ENCODE measurements at regions of chr16 and their contacts with region 1.

Region 1: GRCh38 chr16:2194852-2195321 is 1.5 kb downstream of the CASKIN1 start:
- DNase-seq: no peak
- ATAC-seq: peak; percentile 81
- H3K4me3 ChIP-seq: no peak overlapping the region
- H3K27ac ChIP-seq: no peak overlapping the region; the same call in 1 of the 2 replicates
- H3K4me1 ChIP-seq: peaks cover 5 to 19% of the 10 kb centered on the region in 2 experiments
- H3K27me3 ChIP-seq: no peaks in the 10 kb centered on the region
- CTCF ChIP-seq: peak; percentile 62 to 73 (median 63)
- POLR2A ChIP-seq: no peak
- RAD21 ChIP-seq: peak; percentile 93

Region 2: DNA sequence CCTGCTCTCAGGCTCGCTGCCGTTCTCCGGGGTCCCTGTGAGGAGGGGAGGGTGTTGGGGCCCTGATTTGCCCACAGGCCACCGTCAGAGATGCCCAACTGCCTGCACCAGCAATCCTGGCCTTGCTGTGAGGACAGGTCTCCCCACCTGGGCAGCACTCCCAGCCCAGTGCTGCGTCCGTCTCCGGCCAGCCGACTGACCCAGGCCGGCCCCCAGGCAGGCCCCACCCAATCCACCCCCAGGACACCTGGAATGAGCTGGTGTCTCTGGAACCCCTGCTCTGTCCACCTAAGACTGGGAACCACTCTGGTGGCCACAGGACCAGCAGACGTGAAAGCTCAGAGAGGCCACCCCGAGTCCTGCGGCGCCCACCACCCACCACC is 79.3 kb before region 1 on chr16:
- CTCF ChIA-PET with region 1: no interaction called
- POLR2A ChIA-PET with region 1: no interaction called
- RAD21 ChIA-PET with region 1: no interaction called
- intact Hi-C with region 1: no loop called
- DNase-seq: no peak
- ATAC-seq: no peak
- H3K4me3 ChIP-seq: no peak overlapping the region
- H3K27ac ChIP-seq: no peak overlapping the region
- H3K4me1 ChIP-seq: no peaks in the 10 kb centered on the region
- H3K27me3 ChIP-seq: no peaks in the 10 kb centered on the region
- CTCF ChIP-seq: no peak
- POLR2A ChIP-seq: no peak
- RAD21 ChIP-seq: no peak

Region 3: DNA sequence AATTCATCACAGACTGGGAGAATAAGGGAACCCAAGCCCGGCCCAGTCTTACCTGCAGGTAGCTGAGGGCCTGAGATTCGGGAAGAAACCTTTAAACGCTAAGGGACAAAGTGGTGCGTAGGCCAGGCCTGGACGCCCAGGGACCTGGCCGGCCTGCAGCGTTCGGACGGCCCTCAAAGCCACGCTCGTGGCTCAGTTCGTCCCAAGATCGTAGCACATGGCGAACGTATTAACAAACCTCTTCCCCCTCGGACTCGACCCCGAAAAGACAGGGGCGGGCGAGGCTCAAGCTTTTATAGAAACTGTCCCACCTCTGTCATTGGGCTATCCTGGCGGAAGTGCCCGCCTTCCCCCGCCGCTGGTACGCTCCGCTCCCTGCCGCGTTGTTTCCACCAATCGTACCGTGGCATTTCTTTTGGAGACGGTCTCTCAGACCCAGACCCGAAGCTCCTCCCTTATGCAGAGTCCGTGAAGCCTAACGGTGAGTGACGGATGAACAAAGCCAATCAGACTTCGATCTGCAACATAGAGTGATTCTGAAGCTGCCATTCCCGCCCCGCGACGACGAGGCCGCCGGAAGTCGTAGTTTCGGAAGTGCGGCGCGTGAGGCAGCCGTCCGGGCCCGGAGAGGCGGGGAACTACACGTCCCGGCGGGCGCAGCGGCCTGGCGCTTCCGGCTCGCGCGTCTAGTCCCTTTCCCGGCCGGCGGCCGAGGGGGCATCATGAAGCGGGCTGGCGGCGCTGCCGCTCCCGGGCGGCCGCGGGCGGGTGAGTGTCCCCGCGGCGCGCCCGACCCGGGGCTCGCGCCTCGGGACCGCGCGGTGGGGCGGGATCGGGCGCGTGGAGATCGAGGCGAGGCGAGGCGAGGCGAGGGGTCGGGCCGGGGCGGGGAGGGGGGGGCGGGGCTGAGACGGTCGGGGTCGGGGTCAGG is 39.5 kb before region 1 on chr16 and contains the start of gene TRAF7:
- CTCF ChIA-PET with region 1: no interaction called
- POLR2A ChIA-PET with region 1: interaction called, 11 read pairs
- RAD21 ChIA-PET with region 1: no interaction called
- intact Hi-C with region 1: no loop called
- DNase-seq: peak; percentile 100
- ATAC-seq: peak; percentile 74
- H3K4me3 ChIP-seq: peak within 1 kb of the TSS; percentile 98 to 100
- H3K27ac ChIP-seq: peak within 1 kb of the TSS; percentile 84
- H3K4me1 ChIP-seq: peaks cover 48 to 74% of the 10 kb centered on the region in 2 experiments
- H3K27me3 ChIP-seq: no peaks in the 10 kb centered on the region
- CTCF ChIP-seq: no peak
- POLR2A ChIP-seq: peak; percentile 99
- RAD21 ChIP-seq: no peak
- total RNA-seq, gene TRAF7: 160 TPM

Region 4: GRCh38 chr16:2205104-2205966 is 10.4 kb after region 1 on chr16 and contains the start of gene MLST8:
- CTCF ChIA-PET with region 1: interaction called, 11 read pairs
- POLR2A ChIA-PET with region 1: no interaction called
- RAD21 ChIA-PET with region 1: no interaction called
- intact Hi-C with region 1: no loop called
- DNase-seq: peak; percentile 78
- ATAC-seq: peak; percentile 75
- H3K4me3 ChIP-seq: peak within 1 kb of the TSS; percentile 81 to 86
- H3K27ac ChIP-seq: peak within 1 kb of the TSS; percentile 94
- H3K4me1 ChIP-seq: peaks cover 5 to 23% of the 10 kb centered on the region in 2 experiments
- H3K27me3 ChIP-seq: no peaks in the 10 kb centered on the region
- CTCF ChIP-seq: 0 out of 6 replicates have a peak, but pooled peaks of 2 of the 3 experiments have one; percentile 10 to 13
- POLR2A ChIP-seq: peak; percentile 43
- RAD21 ChIP-seq: no peak
- total RNA-seq, gene MLST8: 58.7 TPM

Region 5: GRCh38 chr16:2428051-2428783 is 233.3 kb after region 1 on chr16:
- CTCF ChIA-PET with region 1: no interaction called
- POLR2A ChIA-PET with region 1: no interaction called
- RAD21 ChIA-PET with region 1: no interaction called
- intact Hi-C with region 1: no loop called
- DNase-seq: no peak
- ATAC-seq: peak; percentile 61
- H3K4me3 ChIP-seq: peak overlapping the region; percentile 68 to 81
- H3K27ac ChIP-seq: peak overlapping the region; percentile 91
- H3K4me1 ChIP-seq: peaks cover 12 to 38% of the 10 kb centered on the region in 2 experiments; a peak in 3 of 4 replicates
- H3K27me3 ChIP-seq: no peaks in the 10 kb centered on the region
- CTCF ChIP-seq: peak in 2 of 3 experiments; percentile 41 to 46; a peak in 4 of 6 replicates
- POLR2A ChIP-seq: no peak
- RAD21 ChIP-seq: no peak

Region 6: DNA sequence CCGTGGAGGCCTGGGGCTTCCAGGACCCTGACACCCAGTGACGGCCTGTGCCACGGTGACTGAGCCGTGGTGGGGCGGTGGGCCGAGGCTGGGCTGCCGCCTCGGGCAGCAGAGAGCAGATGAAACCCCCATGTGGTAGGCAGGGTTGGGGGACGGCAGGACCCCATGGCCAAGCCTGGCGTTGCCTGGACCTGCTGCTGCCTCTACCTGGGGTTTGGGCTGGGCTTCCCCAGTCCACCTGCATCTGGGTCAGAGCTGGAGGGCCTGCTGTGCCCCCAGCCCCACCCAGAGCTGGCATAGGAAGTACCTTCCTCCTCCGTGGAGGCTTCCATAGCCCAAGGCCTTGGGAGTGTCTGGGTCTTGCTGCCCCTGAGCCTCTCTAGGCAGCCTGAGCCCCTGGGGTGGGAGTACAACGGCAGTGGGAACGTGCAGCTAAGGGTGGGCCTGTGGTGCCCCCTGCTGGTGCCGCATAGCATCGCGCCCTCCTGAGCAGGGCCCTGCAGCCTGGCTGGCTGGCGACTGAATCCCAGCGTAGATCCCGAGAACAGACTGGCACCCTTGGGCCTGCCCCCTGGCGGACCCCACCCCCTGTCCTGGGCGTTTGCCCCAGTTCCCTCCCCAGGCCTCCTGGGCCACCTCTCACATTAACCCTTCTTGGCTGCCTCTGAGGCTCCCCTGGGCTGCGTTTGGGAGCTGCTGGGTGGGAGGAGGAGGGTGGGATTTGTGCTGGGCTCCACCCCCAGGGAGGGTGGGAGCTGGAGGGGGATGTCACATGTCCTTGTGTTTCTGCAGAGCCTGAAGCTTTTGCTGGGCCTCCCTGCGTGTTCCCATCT is 306.2 kb after region 1 on chr16:
- CTCF ChIA-PET with region 1: interaction called, 15 read pairs
- POLR2A ChIA-PET with region 1: no interaction called
- RAD21 ChIA-PET with region 1: interaction called in 1 of 2 experiments, 6 read pairs
- intact Hi-C with region 1: loop called (anchors 10 kb)
- DNase-seq: no peak
- ATAC-seq: peak; percentile 95
- H3K4me3 ChIP-seq: no peak overlapping the region
- H3K27ac ChIP-seq: no peak overlapping the region; the same call in 1 of the 2 replicates
- H3K4me1 ChIP-seq: peaks cover 3 to 12% of the 10 kb centered on the region in 2 experiments; a peak in 3 of 4 replicates
- H3K27me3 ChIP-seq: no peaks in the 10 kb centered on the region
- CTCF ChIP-seq: peak; percentile 85 to 97 (median 95); a peak in 5 of 6 replicates
- POLR2A ChIP-seq: no peak
- RAD21 ChIP-seq: peak; percentile 97

Measured in HCT116 (cell line).